Left ventricle myocardium superior (tissue), 1 donor: ENCODE measurements at regions of chr11 and their contacts with region 1.

Region 1: GRCh38 chr11:87352759-87353707 is 315.3 kb downstream of the TMEM135 start:
- DNase-seq: peak; percentile 92
- ATAC-seq: peak; percentile 90

Region 2: GRCh38 chr11:87421422-87421821 is 68.4 kb after region 1 on chr11:
- intact Hi-C with region 1: loop called (anchors 5 kb)
- DNase-seq: no peak
- ATAC-seq: peak; percentile 93